GM12878 (cell line): ENCODE measurements at regions of chr18 and their contacts with region 1.

Region 1: DNA sequence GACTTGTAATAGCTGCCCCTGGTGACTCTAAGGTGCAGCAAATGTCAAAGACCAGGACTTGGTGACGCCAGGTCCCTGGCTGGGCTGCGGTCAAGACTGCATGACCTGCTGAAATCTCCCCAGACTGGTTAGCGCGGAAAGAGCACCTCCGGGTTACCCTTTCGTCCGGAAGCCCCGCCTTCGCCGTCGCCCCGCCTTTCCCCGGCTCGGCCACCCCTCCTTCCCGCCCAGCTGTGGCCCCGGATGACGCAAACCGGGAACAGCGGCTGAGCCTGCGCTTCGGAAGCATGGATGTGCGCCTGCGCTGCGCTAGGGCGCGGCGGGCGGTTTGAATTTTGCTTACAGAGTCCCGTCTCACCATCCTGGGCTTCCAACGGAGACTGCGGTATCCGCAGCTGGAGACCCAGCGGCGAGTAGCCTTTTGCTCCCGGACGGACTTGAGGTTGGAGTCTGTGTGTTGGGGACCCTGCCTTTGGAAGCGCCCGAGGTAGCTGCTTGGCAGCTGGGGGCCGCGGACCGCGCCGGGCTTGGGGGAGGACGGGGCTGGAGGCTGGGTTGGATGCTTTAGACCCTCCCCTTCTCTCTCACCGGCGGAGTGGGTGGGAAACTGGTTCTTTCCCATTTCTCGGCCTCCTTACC is at the start of gene SKA1:
- DNase-seq: peak; percentile 77
- ATAC-seq: peak; percentile 98
- H3K4me3 ChIP-seq: peak within 1 kb of the TSS; percentile 93
- H3K27ac ChIP-seq: peak within 1 kb of the TSS; percentile 82
- H3K4me1 ChIP-seq: peaks cover 7% of the 10 kb centered on the region
- H3K27me3 ChIP-seq: no peaks in the 10 kb centered on the region
- CTCF ChIP-seq: no peak
- EP300 ChIP-seq: peak in 1 of 2 experiments; percentile 26; a peak in 1 of 4 replicates
- POLR2A ChIP-seq: peak; percentile 91
- RAD21 ChIP-seq: no peak
- polyA plus RNA-seq, gene SKA1: 16.4 to 17.6 TPM

Region 2: GRCh38 chr18:50320719-50321118 is 54.2 kb before region 1 on chr18:
- CTCF ChIA-PET with region 1: no interaction called
- POLR2A ChIA-PET with region 1: no interaction called
- RAD21 ChIA-PET with region 1: no interaction called
- SMC1A ChIA-PET with region 1: no interaction called
- in situ Hi-C with region 1: no loop called
- intact Hi-C with region 1: no loop called
- DNase-seq: peak; percentile 58
- ATAC-seq: peak; percentile 86
- H3K4me3 ChIP-seq: no peak overlapping the region
- H3K27ac ChIP-seq: peak overlapping the region; percentile 78
- H3K4me1 ChIP-seq: peaks cover 27% of the 10 kb centered on the region
- H3K27me3 ChIP-seq: no peaks in the 10 kb centered on the region
- CTCF ChIP-seq: no peak
- EP300 ChIP-seq: peak in 1 of 2 experiments; percentile 61; a peak in 1 of 4 replicates
- POLR2A ChIP-seq: no peak
- RAD21 ChIP-seq: no peak

Region 3: GRCh38 chr18:50334546-50335152 is 40.2 kb before region 1 on chr18:
- CTCF ChIA-PET with region 1: no interaction called
- POLR2A ChIA-PET with region 1: no interaction called
- RAD21 ChIA-PET with region 1: no interaction called
- SMC1A ChIA-PET with region 1: no interaction called
- in situ Hi-C with region 1: no loop called
- intact Hi-C with region 1: no loop called
- DNase-seq: peak; percentile 71
- ATAC-seq: peak; percentile 78
- H3K4me3 ChIP-seq: peak overlapping the region; percentile 2; the same call in 1 of the 2 replicates
- H3K27ac ChIP-seq: peak overlapping the region; percentile 31
- H3K4me1 ChIP-seq: peaks cover 49% of the 10 kb centered on the region
- H3K27me3 ChIP-seq: no peaks in the 10 kb centered on the region
- CTCF ChIP-seq: no peak
- EP300 ChIP-seq: peak; percentile 43 to 66; a peak in 3 of 4 replicates
- POLR2A ChIP-seq: no peak
- RAD21 ChIP-seq: no peak

Region 4: DNA sequence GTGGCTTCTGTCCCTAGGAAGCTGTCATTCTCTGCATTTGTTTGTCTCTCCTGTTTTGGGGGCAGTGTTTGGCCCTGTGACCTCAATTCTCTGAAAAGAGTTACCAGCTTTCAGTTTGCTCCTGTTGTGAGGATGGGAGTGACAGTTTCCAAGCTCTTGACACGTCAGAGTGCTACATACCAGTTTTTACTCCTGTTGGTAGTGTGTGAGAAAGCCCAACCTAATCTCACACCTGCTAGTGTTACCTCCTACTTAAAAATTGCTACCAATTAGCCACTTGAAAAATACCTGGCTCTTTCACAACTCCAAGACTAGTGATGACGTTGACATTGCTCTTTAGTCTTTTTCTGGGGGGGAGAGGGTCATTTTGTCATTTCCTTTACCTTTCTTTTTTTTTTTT is 14.1 kb after region 1 on chr18:
- CTCF ChIA-PET with region 1: interaction called, 5 read pairs
- POLR2A ChIA-PET with region 1: interaction called, 4 read pairs
- RAD21 ChIA-PET with region 1: no interaction called
- SMC1A ChIA-PET with region 1: interaction called, 14 read pairs
- in situ Hi-C with region 1: no loop called
- intact Hi-C with region 1: no loop called
- DNase-seq: no peak
- ATAC-seq: no peak
- H3K4me3 ChIP-seq: no peak overlapping the region
- H3K27ac ChIP-seq: no peak overlapping the region
- H3K4me1 ChIP-seq: no peaks in the 10 kb centered on the region
- H3K27me3 ChIP-seq: no peaks in the 10 kb centered on the region
- CTCF ChIP-seq: no peak
- EP300 ChIP-seq: no peak
- POLR2A ChIP-seq: no peak
- RAD21 ChIP-seq: no peak

Region 5: DNA sequence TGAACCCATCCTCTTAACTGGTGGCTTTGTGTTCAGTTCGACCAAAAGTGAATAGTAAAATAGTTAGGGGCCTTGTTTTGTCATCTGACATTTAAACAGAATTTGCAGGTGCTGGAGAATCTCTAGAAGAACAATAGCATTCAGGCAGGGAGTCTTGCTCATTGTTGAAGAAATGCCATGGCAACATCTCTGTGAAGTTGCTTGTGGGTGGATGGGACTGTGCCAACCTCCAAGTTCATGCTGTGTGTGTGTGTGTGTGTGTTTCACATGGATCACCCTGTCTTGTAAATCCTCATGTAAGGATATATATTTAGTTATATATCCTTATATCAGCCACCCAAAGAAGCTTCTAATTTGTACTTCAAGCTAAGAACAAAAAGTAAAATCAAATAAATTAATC is 66.6 kb after region 1 on chr18:
- CTCF ChIA-PET with region 1: no interaction called
- POLR2A ChIA-PET with region 1: no interaction called
- RAD21 ChIA-PET with region 1: no interaction called
- SMC1A ChIA-PET with region 1: no interaction called
- in situ Hi-C with region 1: no loop called
- intact Hi-C with region 1: no loop called
- DNase-seq: no peak
- ATAC-seq: no peak
- H3K4me3 ChIP-seq: no peak overlapping the region
- H3K27ac ChIP-seq: no peak overlapping the region
- H3K4me1 ChIP-seq: no peaks in the 10 kb centered on the region
- H3K27me3 ChIP-seq: no peaks in the 10 kb centered on the region
- CTCF ChIP-seq: no peak
- EP300 ChIP-seq: no peak
- POLR2A ChIP-seq: no peak
- RAD21 ChIP-seq: no peak